ENCODE measurements at regions of chr17 and their contacts with region 1.

Region 1: DNA sequence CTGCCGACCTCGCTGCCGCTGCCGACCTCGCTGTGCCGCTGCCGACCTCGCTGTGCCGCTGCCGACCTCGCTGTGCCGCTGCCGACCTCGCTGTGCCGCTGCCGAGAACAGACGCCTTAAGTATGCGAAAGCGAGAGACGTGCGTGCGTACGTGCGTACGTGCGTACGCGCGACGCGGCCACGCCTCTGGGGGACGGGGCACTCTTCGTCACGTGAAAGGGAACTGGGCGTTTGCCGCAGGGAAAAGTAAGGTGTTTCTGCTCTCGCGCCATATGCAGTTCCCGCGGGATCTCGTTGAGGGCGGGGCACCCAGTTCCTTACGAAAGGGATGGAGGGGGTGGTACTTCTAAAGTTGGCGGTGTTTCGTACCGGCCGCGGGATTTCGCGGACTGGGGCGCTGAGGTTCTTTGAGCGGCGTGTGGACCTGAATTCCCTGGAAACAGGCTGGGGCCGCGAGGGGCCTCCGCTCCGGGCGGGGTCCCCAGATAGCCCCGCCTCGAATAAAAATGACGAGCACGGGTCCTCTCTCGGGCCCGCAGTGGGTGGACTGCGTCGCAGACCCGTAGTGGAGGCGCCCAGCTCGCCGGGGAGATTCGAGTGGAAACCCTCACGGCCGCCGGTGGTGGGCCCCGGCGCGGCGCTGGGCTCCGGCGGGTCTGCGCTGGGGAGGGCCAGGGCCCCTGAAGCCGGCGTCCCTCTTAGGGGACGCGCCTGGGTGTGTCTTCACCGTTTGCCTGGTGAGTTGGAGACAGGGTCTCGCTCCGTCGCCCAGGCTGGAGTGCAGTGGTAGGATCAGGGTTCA is at the start of gene EIF4A3:
- DNase-seq: peak; percentile 100
- H3K4me3 ChIP-seq: peak within 1 kb of the TSS; percentile 92 to 98 (median 96)
- H3K27ac ChIP-seq: peak within 1 kb of the TSS; percentile 96 to 98 (median 96)
- H3K4me1 ChIP-seq: peaks cover 22 to 44% (median 38%) of the 10 kb centered on the region in 4 donors
- H3K27me3 ChIP-seq: no peaks in the 10 kb centered on the region
- CTCF ChIP-seq: peak in 1 of 3 experiments; percentile 7
- EP300 ChIP-seq: peak; percentile 98
- POLR2A ChIP-seq: peak; percentile 83
- total RNA-seq, gene EIF4A3: 31.0 to 61.0 (median 39.8) TPM

Region 2: GRCh38 chr17:80023481-80024205 is 123.6 kb before region 1 on chr17:
- intact Hi-C with region 1: no loop called
- DNase-seq: no peak
- H3K4me3 ChIP-seq: peak overlapping the region; percentile 7 to 39 (median 30)
- H3K27ac ChIP-seq: peak overlapping the region in 1 of 4 donors; percentile 7
- H3K4me1 ChIP-seq: peaks cover 3 to 46% (median 37%) of the 10 kb centered on the region in 4 donors
- H3K27me3 ChIP-seq: no peaks in the 10 kb centered on the region
- CTCF ChIP-seq: no peak
- EP300 ChIP-seq: no peak
- POLR2A ChIP-seq: no peak

Region 3: GRCh38 chr17:80101011-80101945 is 46.0 kb before region 1 on chr17 and contains the start of gene GAA:
- intact Hi-C with region 1: loop called (anchors 5 kb)
- DNase-seq: no peak
- H3K4me3 ChIP-seq: peak within 1 kb of the TSS; percentile 85 to 97 (median 92)
- H3K27ac ChIP-seq: peak within 1 kb of the TSS; percentile 91 to 96 (median 94)
- H3K4me1 ChIP-seq: peaks cover 14 to 41% (median 27%) of the 10 kb centered on the region in 4 donors
- H3K27me3 ChIP-seq: no peaks in the 10 kb centered on the region
- CTCF ChIP-seq: peak; percentile 88 to 97 (median 91)
- EP300 ChIP-seq: no peak
- POLR2A ChIP-seq: no peak
- total RNA-seq, gene GAA: 65.4 to 84.4 (median 73.7) TPM

Region 4: GRCh38 chr17:80263253-80264204 is 116.3 kb after region 1 on chr17:
- intact Hi-C with region 1: loop called (anchors 5 kb)
- DNase-seq: peak; percentile 94
- H3K4me3 ChIP-seq: peak overlapping the region; percentile 36 to 59 (median 48)
- H3K27ac ChIP-seq: peak overlapping the region; percentile 96 to 99 (median 98)
- H3K4me1 ChIP-seq: peaks cover 36 to 54% (median 45%) of the 10 kb centered on the region in 4 donors
- H3K27me3 ChIP-seq: no peaks in the 10 kb centered on the region
- CTCF ChIP-seq: peak in 2 of 3 experiments; percentile 19 to 27
- EP300 ChIP-seq: no peak
- POLR2A ChIP-seq: no peak